ENCODE measurements at regions of chr17 and their contacts with region 1.

Region 1: DNA sequence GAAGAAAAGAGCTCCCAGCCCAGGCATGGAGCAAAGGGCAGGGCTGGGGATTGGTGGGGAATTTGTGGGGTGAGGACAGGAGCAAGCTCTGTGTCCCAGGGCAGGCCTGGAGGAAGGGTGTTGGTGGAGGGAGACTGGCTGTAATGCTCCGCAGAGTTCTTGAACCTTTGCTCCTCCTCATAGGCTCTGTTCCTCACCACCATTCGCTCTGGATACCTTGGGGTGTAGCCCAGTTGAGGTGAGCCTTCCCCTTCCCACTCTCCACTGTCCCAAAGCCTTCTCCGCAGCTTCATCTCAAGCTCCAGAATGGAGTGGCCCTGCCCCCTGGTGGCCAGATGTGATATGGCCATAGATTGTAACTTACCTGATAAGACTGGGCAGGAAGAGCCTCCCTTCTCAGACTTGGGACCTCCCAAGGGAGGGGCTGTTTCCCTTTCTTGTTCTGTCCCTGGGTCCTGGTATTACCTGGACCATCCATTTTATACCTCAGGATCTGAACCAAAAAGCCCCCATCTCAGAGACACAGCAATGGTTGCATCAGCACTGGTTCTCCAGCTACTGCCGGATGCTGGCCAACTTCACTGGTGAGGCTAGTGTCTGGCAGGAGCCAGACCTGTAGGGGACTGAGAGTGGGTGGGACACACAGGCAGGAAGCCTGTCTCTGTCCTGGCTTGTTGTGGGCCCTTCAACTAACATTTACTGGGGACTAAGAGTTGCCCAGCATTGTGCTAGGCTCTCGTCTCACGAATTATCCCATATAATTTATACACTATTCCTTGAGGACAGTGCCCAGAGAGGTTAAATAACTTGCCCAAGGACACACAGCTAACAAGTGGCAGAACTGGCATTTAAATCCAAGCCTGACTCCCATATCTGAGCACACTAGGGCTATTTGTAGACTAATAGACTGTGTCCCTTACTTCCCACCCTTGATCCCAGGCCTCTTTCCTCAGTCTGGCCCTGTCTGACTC is 19.1 kb upstream of the STAC2 start:
- DNase-seq: peak; percentile 80
- H3K4me3 ChIP-seq: no peak overlapping the region; a peak in 1 of 4 replicates
- H3K27ac ChIP-seq: no peak overlapping the region
- H3K4me1 ChIP-seq: peaks cover 0 to 2% of the 10 kb centered on the region in 2 experiments; a peak in 1 of 4 replicates
- H3K27me3 ChIP-seq: no peaks in the 10 kb centered on the region
- CTCF ChIP-seq: peak; percentile 94
- EP300 ChIP-seq: no peak
- RAD21 ChIP-seq: peak; percentile 94

Region 2: GRCh38 chr17:38982858-38983746 is 261.8 kb before region 1 on chr17:
- CTCF ChIA-PET with region 1: interaction called, 23 read pairs
- POLR2A ChIA-PET with region 1: no interaction called
- DNase-seq: peak; percentile 75
- H3K4me3 ChIP-seq: no peak overlapping the region; a peak in 1 of 4 replicates
- H3K27ac ChIP-seq: no peak overlapping the region
- H3K4me1 ChIP-seq: peaks cover 0 to 12% of the 10 kb centered on the region in 2 experiments; a peak in 2 of 4 replicates
- H3K27me3 ChIP-seq: no peaks in the 10 kb centered on the region
- CTCF ChIP-seq: peak; percentile 91
- EP300 ChIP-seq: no peak
- RAD21 ChIP-seq: peak; percentile 94

Region 3: GRCh38 chr17:39174907-39175694 is 69.8 kb before region 1 on chr17:
- CTCF ChIA-PET with region 1: interaction called, 22 read pairs
- POLR2A ChIA-PET with region 1: no interaction called
- DNase-seq: peak; percentile 93
- H3K4me3 ChIP-seq: no peak overlapping the region
- H3K27ac ChIP-seq: no peak overlapping the region
- H3K4me1 ChIP-seq: no peaks in the 10 kb centered on the region; a peak in 1 of 4 replicates
- H3K27me3 ChIP-seq: no peaks in the 10 kb centered on the region
- CTCF ChIP-seq: peak; percentile 85
- EP300 ChIP-seq: no peak
- RAD21 ChIP-seq: peak; percentile 67

Region 4: GRCh38 chr17:39199820-39200069 is 45.1 kb before region 1 on chr17:
- CTCF ChIA-PET with region 1: interaction called, 781 read pairs
- POLR2A ChIA-PET with region 1: interaction called, 8 read pairs
- DNase-seq: peak; percentile 91
- H3K4me3 ChIP-seq: peak overlapping the region; percentile 75 to 93
- H3K27ac ChIP-seq: peak overlapping the region; percentile 94 to 99
- H3K4me1 ChIP-seq: peaks cover 25 to 42% of the 10 kb centered on the region in 2 experiments; a peak in 2 of 4 replicates
- H3K27me3 ChIP-seq: no peaks in the 10 kb centered on the region
- CTCF ChIP-seq: no peak
- EP300 ChIP-seq: no peak
- RAD21 ChIP-seq: no peak

Region 5: DNA sequence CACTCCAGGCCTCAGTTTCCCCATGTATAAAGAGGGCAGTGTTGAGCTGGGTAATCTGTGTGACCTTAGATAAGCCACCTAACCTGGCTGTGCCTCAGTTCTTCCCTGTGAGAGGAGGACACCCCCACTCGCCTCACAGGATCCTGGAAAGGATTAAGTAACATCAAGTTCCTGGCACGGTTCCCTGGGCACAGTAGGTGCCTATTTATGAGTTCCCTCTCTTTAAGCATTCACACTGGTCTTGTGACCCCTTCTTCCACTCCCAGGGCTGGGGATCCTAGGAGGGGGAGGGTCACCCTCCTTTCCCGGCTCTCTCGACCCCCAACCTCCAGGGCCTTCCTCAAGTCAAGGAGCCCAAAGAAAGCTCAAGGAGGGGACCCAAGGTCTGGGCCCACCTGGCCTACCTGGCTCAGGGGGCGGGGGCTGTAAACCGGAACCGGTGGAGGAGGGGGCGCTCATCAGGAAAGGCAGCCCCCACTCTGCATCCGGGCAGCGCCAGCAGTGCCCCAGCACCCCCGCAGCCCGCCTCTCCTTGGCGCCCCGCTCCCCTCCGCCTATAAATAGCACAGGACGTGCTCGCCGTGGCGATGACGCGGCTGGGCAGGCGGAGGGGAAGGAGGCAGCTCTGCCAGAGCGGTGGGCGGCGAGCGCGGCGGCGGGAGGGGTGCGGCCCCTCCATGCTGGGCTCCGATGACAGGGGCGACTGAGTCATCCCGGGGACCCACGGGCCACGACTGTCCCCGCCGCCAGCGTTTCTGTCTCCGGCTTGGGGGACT is 35.4 kb before region 1 on chr17:
- CTCF ChIA-PET with region 1: interaction called, 781 read pairs
- POLR2A ChIA-PET with region 1: interaction called, 19 read pairs
- DNase-seq: peak; percentile 78
- H3K4me3 ChIP-seq: peak overlapping the region; percentile 38 to 56
- H3K27ac ChIP-seq: no peak overlapping the region
- H3K4me1 ChIP-seq: peaks cover 9% of the 10 kb centered on the region in 2 experiments; a peak in 2 of 4 replicates
- H3K27me3 ChIP-seq: no peaks in the 10 kb centered on the region
- CTCF ChIP-seq: no peak
- EP300 ChIP-seq: no peak
- RAD21 ChIP-seq: no peak

Region 6: GRCh38 chr17:39219647-39220154 is 25.2 kb before region 1 on chr17:
- CTCF ChIA-PET with region 1: interaction called, 781 read pairs
- POLR2A ChIA-PET with region 1: no interaction called
- DNase-seq: no peak
- H3K4me3 ChIP-seq: no peak overlapping the region
- H3K27ac ChIP-seq: no peak overlapping the region
- H3K4me1 ChIP-seq: no peaks in the 10 kb centered on the region
- H3K27me3 ChIP-seq: no peaks in the 10 kb centered on the region
- CTCF ChIP-seq: no peak
- EP300 ChIP-seq: no peak
- RAD21 ChIP-seq: no peak

Region 7: DNA sequence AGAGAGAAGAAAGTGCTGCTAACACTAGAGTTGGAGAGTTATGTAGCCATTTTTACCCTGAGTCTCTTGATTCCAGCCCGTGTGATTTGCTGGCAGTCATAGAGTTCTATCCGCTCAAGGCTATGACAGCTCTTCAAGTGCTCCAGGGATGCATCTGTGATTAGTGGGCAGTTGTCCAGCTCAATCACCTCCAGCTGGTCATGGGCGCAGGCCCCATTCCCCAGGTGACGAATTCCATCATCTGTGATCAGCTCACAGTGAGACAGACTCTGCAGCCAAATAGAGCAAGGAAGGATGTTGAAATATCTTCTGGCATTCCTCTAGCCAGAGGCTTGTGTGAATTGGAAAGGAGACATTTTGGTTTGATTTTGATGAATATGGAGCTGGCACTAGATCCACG is 19.2 kb after region 1 on chr17:
- CTCF ChIA-PET with region 1: interaction called, 24 read pairs
- POLR2A ChIA-PET with region 1: no interaction called
- DNase-seq: no peak
- H3K4me3 ChIP-seq: no peak overlapping the region
- H3K27ac ChIP-seq: no peak overlapping the region
- H3K4me1 ChIP-seq: no peaks in the 10 kb centered on the region
- H3K27me3 ChIP-seq: no peaks in the 10 kb centered on the region
- CTCF ChIP-seq: no peak
- EP300 ChIP-seq: no peak
- RAD21 ChIP-seq: no peak

Measured in SK-N-SH (cell line).